OCI-LY7 (cell line): ENCODE measurements at regions of chr11 and their contacts with region 1.

Region 1: DNA sequence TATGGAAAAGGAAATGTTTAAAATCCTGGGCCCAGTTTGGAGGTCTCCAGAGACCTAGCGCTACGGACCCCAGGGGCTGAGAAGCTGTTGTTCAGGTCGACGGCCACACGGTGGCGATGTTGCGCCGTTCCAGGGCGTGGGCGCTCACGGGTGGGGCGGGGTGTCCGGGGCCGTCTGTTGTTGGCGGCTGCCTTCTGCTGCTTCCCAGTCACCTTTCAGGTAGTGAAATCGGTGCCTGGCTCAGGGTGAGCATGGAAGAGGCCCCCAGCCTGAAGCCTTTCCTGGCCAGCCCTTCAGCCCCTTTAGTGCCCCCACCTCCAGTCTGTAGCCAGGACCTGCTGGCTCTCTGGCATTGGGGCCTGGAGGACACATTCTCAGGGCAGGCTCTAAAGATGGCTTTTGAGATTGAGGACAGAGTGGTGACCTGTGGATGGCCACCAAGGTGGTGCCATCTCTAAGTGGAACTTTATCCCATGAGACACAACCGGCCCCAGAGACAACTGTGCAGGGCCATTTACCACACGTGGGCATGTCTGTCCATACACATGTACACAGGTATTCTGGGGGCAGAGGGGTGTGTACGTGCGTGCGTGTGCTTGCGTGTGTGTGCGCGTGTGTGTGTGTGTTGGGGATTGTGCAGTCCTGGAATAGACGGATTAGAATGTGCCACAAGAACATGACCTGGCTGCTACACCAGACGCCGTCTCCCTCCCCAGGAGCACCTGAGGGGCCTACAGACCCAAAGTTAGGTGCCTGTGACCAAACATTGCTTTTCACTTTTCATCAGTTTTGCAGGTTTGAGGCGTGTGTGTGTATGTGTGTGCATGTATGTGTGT is 53.8 kb downstream of the ST14 start:
- DNase-seq: peak; percentile 71
- H3K4me3 ChIP-seq: no peak overlapping the region
- H3K27ac ChIP-seq: no peak overlapping the region
- H3K4me1 ChIP-seq: peaks cover 9% of the 10 kb centered on the region
- CTCF ChIP-seq: peak; percentile 94

Region 2: GRCh38 chr11:129881570-129882170 is 331.7 kb before region 1 on chr11:
- CTCF ChIA-PET with region 1: no interaction called
- POLR2A ChIA-PET with region 1: no interaction called
- intact Hi-C with region 1: loop called (anchors 1 kb)
- DNase-seq: peak; percentile 63
- H3K4me3 ChIP-seq: no peak overlapping the region
- H3K27ac ChIP-seq: no peak overlapping the region
- H3K4me1 ChIP-seq: no peaks in the 10 kb centered on the region
- CTCF ChIP-seq: peak; percentile 91

Region 3: DNA sequence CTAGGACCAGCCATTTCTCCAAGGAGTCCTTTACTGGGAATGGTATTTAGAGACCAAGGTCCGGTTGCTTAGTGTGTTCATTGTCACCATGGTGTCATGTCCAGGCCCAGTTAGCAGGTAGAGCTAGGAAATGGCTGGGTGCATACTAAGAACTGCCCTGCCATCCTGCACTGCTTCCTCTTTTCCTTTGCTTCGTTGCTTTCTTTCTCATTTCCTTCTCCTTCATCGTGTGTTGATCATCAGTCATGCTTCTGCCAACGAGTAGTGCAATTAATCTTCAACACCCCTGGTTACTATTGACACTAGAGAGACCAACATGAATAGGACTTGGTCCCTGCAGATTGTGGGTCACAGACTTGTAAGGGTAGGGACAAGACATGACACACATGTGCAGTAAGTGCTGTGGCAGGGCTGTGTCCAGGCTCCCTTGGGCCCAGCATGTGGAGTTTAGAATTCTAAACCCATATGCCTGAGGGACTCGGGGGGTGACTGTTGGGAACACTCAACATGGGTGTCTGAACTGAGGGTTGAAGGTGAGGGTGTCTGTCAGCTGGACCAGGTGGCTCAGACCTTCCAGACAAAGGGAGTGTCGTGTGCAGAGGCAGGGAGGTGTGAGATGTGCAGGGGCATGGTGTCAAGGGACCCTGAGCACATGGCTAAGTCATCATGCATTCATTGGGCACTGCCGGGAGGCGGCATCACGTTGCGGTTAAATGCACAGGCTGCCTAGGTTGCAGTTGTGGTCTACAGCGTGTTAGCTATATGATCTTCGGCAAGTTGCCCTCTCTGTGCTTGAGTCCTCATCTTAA is 11.1 kb before region 1 on chr11:
- CTCF ChIA-PET with region 1: no interaction called
- POLR2A ChIA-PET with region 1: no interaction called
- intact Hi-C with region 1: no loop called
- DNase-seq: no peak
- H3K4me3 ChIP-seq: no peak overlapping the region
- H3K27ac ChIP-seq: no peak overlapping the region
- H3K4me1 ChIP-seq: peaks cover 6% of the 10 kb centered on the region
- CTCF ChIP-seq: no peak

Region 4: GRCh38 chr11:130314750-130315285 is 101.5 kb after region 1 on chr11 and contains the start of gene ZBTB44:
- CTCF ChIA-PET with region 1: no interaction called
- POLR2A ChIA-PET with region 1: no interaction called
- intact Hi-C with region 1: loop called (anchors 5 kb)
- DNase-seq: peak; percentile 94
- H3K4me3 ChIP-seq: peak within 1 kb of the TSS; percentile 89
- H3K27ac ChIP-seq: peak within 1 kb of the TSS; percentile 78
- H3K4me1 ChIP-seq: peaks cover 42% of the 10 kb centered on the region
- CTCF ChIP-seq: no peak
- total RNA-seq, gene ZBTB44: 43.3 and 60.2 TPM in 2 replicates

Region 5: GRCh38 chr11:130370845-130371590 is 157.7 kb after region 1 on chr11:
- CTCF ChIA-PET with region 1: interaction called, 4 read pairs
- POLR2A ChIA-PET with region 1: no interaction called
- intact Hi-C with region 1: loop called (anchors 1 kb)
- DNase-seq: peak; percentile 44
- H3K4me3 ChIP-seq: no peak overlapping the region
- H3K27ac ChIP-seq: no peak overlapping the region
- H3K4me1 ChIP-seq: no peaks in the 10 kb centered on the region
- CTCF ChIP-seq: peak; percentile 72

Region 6: GRCh38 chr11:130389335-130389935 is 176.1 kb after region 1 on chr11:
- CTCF ChIA-PET with region 1: no interaction called
- POLR2A ChIA-PET with region 1: no interaction called
- intact Hi-C with region 1: no loop called
- DNase-seq: no peak
- H3K4me3 ChIP-seq: no peak overlapping the region
- H3K27ac ChIP-seq: no peak overlapping the region
- H3K4me1 ChIP-seq: no peaks in the 10 kb centered on the region
- CTCF ChIP-seq: no peak

Region 7: GRCh38 chr11:130434521-130435223 is 221.3 kb after region 1 on chr11:
- CTCF ChIA-PET with region 1: no interaction called
- POLR2A ChIA-PET with region 1: no interaction called
- intact Hi-C with region 1: loop called (anchors 2 kb)
- DNase-seq: peak; percentile 84
- H3K4me3 ChIP-seq: peak overlapping the region; percentile 70
- H3K27ac ChIP-seq: no peak overlapping the region
- H3K4me1 ChIP-seq: no peaks in the 10 kb centered on the region
- CTCF ChIP-seq: peak; percentile 90

Region 8: DNA sequence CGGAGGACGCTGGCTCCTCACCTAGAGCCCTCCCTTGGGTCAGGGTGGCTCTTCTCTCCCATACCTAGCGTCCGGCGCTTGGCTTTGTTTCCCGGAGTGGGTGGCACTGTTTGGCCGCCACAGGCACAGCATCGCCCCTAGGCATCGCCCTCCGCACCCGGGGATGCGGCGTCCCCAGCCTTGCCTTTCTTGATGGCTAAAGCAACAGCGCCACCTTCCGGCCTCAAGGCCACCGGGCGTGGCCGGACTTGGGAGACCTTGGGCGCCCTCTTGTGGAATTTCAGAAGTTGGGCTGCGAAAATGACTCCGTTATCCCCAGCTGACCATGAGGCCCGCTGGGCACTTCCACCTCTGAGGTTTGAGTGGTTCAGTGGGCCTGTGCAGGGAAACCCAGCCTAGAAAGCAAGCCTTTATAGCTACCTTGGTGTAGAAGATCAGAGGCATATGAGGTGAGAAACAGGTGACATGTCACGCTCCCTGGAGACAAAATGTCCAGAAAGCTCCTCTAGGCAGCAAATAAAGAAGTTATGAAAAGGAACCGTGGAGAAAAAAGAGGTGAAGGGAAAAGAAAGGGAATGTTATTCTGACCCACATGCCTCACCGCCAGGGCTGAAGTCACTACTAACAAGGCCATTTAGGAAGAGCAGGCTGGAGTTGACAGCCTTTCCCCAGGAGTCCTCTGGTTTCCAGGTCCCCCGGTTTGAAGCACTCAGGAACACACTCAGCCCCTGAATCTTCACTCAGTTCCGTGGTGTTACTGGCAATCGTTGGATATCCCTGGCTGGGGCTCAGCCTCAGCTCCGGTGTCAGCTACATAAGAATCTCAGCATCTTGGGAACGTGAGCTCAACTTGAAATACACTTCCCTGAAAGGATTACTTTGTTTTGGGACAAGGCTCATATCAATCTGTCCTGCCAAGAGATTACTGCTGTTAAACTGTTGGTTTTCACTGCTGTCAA is 648.8 kb after region 1 on chr11:
- CTCF ChIA-PET with region 1: no interaction called
- POLR2A ChIA-PET with region 1: interaction called, 6 read pairs
- intact Hi-C with region 1: loop called (anchors 2 kb)
- DNase-seq: peak; percentile 93
- H3K4me3 ChIP-seq: no peak overlapping the region
- H3K27ac ChIP-seq: no peak overlapping the region
- H3K4me1 ChIP-seq: no peaks in the 10 kb centered on the region
- CTCF ChIP-seq: peak; percentile 100